ENCODE measurements at regions of chr17 and their contacts with region 1.

Region 1: GRCh38 chr17:28661635-28662537 is at the starts of genes SDF2 and SUPT6H:
- DNase-seq: peak; percentile 90
- H3K4me3 ChIP-seq: peak within 1 kb of the TSS; percentile 78 to 84
- H3K27ac ChIP-seq: peak within 1 kb of the TSS; percentile 98 to 99
- H3K4me1 ChIP-seq: peaks cover 8% of the 10 kb centered on the region
- H3K27me3 ChIP-seq: no peaks in the 10 kb centered on the region
- CTCF ChIP-seq: no peak
- POLR2A ChIP-seq: peak; percentile 89
- total RNA-seq, gene SDF2: 53.3 to 80.1 TPM
- total RNA-seq, gene SUPT6H: 52.7 to 138 TPM

Region 2: GRCh38 chr17:28610376-28610775 is 51.5 kb before region 1 on chr17:
- intact Hi-C with region 1: no loop called
- DNase-seq: no peak
- H3K4me3 ChIP-seq: no peak overlapping the region
- H3K27ac ChIP-seq: no peak overlapping the region
- H3K4me1 ChIP-seq: no peaks in the 10 kb centered on the region
- H3K27me3 ChIP-seq: no peaks in the 10 kb centered on the region
- CTCF ChIP-seq: no peak
- POLR2A ChIP-seq: no peak

Region 3: DNA sequence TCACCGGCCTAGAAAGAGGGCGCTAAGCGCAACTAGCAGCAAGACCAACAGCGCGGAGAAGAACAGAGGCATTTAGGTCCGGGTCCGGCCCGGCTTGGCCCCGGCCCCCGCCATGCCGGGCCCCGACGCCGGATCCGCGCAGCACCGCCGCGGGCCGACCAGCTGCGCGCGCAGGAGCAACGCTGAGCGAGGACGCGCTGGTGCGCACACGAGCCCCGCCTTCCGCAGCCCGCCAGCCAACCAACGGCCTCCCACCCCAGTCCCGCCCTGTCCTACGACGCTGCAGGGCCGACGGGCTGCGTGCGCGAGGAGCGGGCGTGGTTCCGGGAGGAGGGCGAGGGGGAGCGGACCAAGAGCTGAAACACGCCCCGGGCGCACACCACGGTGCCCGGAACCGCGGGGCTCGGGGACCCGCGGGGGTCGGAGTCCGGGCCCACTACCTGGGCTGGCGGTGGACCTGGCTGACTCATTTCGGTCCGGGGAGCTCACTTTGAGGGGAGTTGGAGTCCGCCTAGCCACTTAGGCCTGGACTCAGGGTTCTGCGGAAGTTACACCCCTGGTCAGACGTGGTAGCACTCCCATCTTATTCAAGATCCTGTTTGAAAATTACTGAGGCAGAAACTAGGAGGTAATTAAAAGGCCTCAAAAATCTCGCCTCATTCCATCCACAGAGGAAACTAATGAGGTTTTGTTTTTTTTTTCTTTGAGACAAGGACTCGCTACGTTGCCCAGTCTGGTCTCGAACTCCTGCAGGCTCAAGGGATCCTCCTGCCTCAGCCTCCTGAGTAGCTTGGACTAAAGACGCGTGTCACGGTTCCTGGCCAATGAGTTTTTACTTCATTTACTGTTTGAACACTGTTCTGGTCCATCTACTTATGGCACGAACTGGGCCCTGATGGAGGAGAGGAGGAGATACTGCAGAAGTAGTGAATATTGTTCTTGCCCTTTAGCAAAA is 16.6 kb before region 1 on chr17 and contains the start of gene BLTP2:
- intact Hi-C with region 1: loop called (anchors 2 kb)
- DNase-seq: peak; percentile 95
- H3K4me3 ChIP-seq: peak within 1 kb of the TSS; percentile 91 to 93
- H3K27ac ChIP-seq: peak within 1 kb of the TSS; percentile 89 to 95
- H3K4me1 ChIP-seq: no peaks in the 10 kb centered on the region
- H3K27me3 ChIP-seq: no peaks in the 10 kb centered on the region
- CTCF ChIP-seq: peak in 2 of 4 experiments; percentile 10 to 36
- POLR2A ChIP-seq: peak; percentile 95
- total RNA-seq, gene BLTP2: 42.2 to 94.2 TPM

Region 4: DNA sequence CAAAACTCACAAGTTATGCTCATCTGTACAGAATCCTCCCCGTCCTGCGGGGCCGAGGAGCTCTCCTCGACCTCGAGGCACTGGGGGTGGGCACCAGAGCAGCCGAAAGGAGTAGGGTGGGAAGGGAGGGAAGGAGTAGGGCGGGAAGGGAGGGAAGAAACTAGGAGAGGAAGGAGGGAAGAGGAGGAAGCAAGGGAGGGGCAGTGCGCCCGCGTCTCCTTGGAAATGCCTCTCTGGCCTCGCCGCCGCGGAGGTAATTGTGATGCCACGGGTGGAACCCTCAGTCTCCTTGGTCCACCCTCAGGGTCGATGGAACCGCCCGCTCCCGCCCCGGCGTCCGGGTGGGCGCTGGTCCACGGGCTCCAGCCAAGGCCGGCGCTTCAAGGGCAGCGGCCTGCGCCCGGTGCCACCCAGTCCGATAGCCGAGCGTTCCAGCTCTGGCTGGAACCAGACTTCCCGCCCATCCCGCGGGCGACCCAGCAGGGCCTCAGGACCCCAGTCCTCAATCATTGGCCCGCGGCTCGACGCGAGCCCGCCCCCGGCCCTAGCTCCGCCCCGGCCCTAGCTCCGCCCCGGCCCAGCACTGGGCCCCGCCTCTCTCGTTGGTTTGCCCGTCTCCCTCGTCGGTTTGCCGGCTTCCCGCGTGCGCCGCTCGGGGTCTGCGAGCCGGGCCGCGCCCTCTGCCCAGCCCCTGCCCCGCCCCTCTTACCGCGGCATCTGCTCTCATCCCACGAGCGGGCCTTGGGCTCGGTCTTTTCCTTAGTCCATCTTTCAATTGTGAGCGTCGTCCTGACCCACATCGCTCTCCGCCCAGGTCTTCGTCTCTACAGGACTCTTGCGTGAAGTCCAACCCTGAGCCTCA is 49.2 kb after region 1 on chr17:
- intact Hi-C with region 1: loop called (anchors 5 kb)
- DNase-seq: peak; percentile 80
- H3K4me3 ChIP-seq: peak overlapping the region; percentile 42 to 53
- H3K27ac ChIP-seq: peak overlapping the region; percentile 85 to 93
- H3K4me1 ChIP-seq: no peaks in the 10 kb centered on the region
- H3K27me3 ChIP-seq: no peaks in the 10 kb centered on the region
- CTCF ChIP-seq: no peak
- POLR2A ChIP-seq: peak; percentile 86